ENCODE measurements at regions of chr2 and their contacts with region 1.

Region 1: DNA sequence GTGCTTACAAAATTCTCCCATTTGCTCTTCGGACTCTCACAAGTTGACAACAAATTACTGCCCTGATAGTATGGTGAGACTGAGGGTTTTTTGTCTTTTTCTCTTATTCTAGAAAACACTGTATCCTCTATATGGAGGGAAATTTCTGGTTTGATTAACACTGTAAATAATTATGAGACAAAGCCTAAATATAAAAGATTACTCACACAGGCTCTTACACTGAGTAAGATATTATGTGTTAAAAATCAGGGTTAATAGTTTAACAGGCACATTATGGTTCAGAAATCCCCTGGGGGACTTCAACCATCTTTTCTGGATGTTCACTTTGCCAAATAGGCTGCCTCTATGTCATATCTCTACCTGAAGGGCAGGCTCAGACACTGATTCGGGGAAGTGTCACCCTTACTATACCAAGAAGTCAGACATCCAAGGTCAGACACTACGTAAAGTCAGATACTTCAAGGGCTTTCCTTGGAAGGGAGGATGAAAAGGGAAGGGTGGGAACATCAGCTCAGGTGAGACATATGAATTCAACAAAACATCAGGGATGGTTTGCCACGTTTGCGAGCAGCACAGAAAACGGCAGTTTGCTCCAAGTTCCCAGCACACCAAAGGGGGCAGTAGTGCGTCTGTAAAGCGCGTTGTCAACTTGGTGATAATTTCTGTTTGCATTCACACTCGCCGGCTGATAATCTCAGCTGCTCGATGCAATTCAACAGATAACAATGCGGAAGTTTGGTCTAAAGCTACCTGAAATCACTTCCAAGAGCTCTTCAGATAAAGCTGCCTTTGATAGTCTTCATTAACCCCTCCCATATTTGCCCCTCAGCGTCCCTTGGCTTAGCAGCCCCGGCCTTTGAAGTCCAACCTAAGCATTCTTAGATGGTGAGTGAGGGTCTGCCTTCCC is 972 bp upstream of the RASGRP3 start:
- DNase-seq: peak; percentile 61 to 89 (median 83)
- ATAC-seq: peak; percentile 86
- H3K4me3 ChIP-seq: peak overlapping the region; percentile 81
- H3K4me3 Mint-ChIP-seq: peak overlapping the region; percentile 88 to 99 (median 95)
- H3K27ac ChIP-seq: peak overlapping the region; percentile 91
- H3K27ac Mint-ChIP-seq: peak overlapping the region; percentile 95 to 100 (median 98)
- H3K4me1 ChIP-seq: peaks cover 9 to 11% of the 10 kb centered on the region in 2 donors
- H3K4me1 Mint-ChIP-seq: peaks cover 14 to 39% (median 32%) of the 10 kb centered on the region in 7 donors
- H3K27me3 ChIP-seq: no peaks in the 10 kb centered on the region
- H3K27me3 Mint-ChIP-seq: peaks cover 0 to 4% (median 0%) of the 10 kb centered on the region in 5 donors

Region 2: GRCh38 chr2:32168513-32168912 is 1307.0 kb before region 1 on chr2:
- CTCF ChIA-PET with region 1: no interaction called
- POLR2A ChIA-PET with region 1: no interaction called
- intact Hi-C with region 1: loop called in 1 of 2 experiments (anchors 10 kb)
- DNase-seq: no peak
- ATAC-seq: no peak
- H3K4me3 ChIP-seq: no peak overlapping the region
- H3K4me3 Mint-ChIP-seq: no peak overlapping the region
- H3K27ac ChIP-seq: no peak overlapping the region
- H3K27ac Mint-ChIP-seq: peak overlapping the region in 4 of 9 donors; percentile 2 to 25 (median 10)
- H3K4me1 ChIP-seq: no peaks in the 10 kb centered on the region
- H3K4me1 Mint-ChIP-seq: peaks cover 17 to 61% (median 49%) of the 10 kb centered on the region in 7 donors
- H3K27me3 ChIP-seq: no peaks in the 10 kb centered on the region
- H3K27me3 Mint-ChIP-seq: no peaks in the 10 kb centered on the region

Region 3: DNA sequence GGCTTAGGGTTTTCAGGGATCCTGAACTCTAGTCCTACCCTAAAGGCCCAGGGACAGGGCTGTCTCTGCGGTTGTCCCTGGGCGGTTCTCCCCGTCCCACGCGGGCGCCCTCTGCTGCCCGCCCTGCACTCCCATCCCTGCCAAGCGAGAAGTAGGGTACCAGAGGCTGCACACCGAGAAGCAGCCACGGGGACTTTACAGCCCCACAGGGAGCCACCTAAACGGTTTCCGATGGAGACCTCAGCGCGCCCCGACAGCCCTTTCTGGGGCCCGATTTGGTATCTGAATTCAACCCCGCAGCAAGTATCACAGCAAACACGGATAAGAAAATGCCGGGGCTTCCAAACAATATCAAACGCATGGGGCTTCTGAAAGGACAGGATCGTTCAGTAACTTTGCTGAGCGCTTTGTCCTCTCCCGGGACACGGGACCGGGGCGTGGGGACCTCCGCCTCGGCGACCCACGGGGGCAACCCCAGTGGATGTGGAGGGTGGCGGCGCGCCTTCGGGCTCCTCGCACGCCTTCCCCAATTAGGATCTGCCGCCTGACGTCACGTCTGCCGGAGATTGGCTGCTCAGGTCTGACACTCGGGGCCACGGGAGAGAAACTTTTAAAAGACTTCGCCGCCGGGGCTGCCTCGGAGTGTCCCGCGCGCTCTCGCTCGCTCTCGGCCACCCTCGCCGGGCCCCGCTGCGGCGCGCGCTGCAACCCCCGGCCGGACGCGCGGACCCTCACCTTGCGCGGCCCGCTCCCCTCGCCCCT is 529.0 kb before region 1 on chr2 and contains the start of gene LTBP1:
- CTCF ChIA-PET with region 1: no interaction called
- POLR2A ChIA-PET with region 1: no interaction called
- intact Hi-C with region 1: loop called in 1 of 2 experiments (anchors 5 kb)
- DNase-seq: peak; percentile 3 to 66 (median 18)
- ATAC-seq: peak; percentile 80
- H3K4me3 ChIP-seq: peak within 1 kb of the TSS; percentile 56
- H3K4me3 Mint-ChIP-seq: peak within 1 kb of the TSS; percentile 64 to 87 (median 81)
- H3K27ac ChIP-seq: no peak within 1 kb of the TSS
- H3K27ac Mint-ChIP-seq: peak within 1 kb of the TSS in 1 of 9 donors; percentile 55
- H3K4me1 ChIP-seq: no peaks in the 10 kb centered on the region
- H3K4me1 Mint-ChIP-seq: peaks cover 3 to 12% (median 5%) of the 10 kb centered on the region in 7 donors
- H3K27me3 ChIP-seq: peaks cover 0 to 7% of the 10 kb centered on the region in 2 donors
- H3K27me3 Mint-ChIP-seq: peaks cover 22 to 40% (median 36%) of the 10 kb centered on the region in 5 donors
- total RNA-seq, gene LTBP1: 0.29 to 2.1 TPM in 2 of 5 experiments, not detected in the others

Region 4: GRCh38 chr2:33497221-33497650 is 21.8 kb after region 1 on chr2:
- CTCF ChIA-PET with region 1: no interaction called
- POLR2A ChIA-PET with region 1: interaction called, 5 read pairs
- intact Hi-C with region 1: loop called in 1 of 2 experiments (anchors 1 kb)
- DNase-seq: no peak
- ATAC-seq: peak; percentile 71
- H3K4me3 ChIP-seq: no peak overlapping the region
- H3K4me3 Mint-ChIP-seq: peak overlapping the region in 2 of 10 donors; percentile 2 to 58
- H3K27ac ChIP-seq: no peak overlapping the region
- H3K27ac Mint-ChIP-seq: peak overlapping the region in 1 of 9 donors; percentile 47
- H3K4me1 ChIP-seq: peaks cover 0 to 26% of the 10 kb centered on the region in 2 donors
- H3K4me1 Mint-ChIP-seq: peaks cover 0 to 43% (median 18%) of the 10 kb centered on the region in 7 donors
- H3K27me3 ChIP-seq: no peaks in the 10 kb centered on the region
- H3K27me3 Mint-ChIP-seq: peaks cover 0 to 5% (median 0%) of the 10 kb centered on the region in 5 donors

Region 5: DNA sequence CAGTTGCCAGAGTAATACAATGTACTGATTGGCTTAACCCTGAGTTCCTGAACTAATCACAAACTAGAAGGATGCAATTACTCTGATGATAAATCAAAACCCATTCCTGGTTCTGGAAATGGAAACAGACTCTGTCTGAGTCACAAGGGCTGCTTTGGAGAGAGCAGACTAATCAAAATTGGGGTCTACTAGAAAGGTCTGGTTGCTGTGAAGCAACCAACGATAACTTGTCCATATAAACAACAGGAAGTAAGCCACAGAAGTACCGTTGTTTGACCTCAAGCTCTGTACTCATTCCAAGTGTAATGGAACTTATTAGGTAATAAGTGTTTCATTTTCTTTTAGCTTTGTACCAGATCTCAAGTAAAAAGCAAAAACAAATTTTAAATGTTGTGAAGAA is 50.7 kb after region 1 on chr2:
- CTCF ChIA-PET with region 1: no interaction called
- POLR2A ChIA-PET with region 1: no interaction called
- intact Hi-C with region 1: loop called in 1 of 2 experiments (anchors 2 kb)
- DNase-seq: no peak
- ATAC-seq: no peak
- H3K4me3 ChIP-seq: no peak overlapping the region
- H3K4me3 Mint-ChIP-seq: no peak overlapping the region
- H3K27ac ChIP-seq: no peak overlapping the region
- H3K27ac Mint-ChIP-seq: peak overlapping the region in 1 of 9 donors; percentile 30
- H3K4me1 ChIP-seq: no peaks in the 10 kb centered on the region
- H3K4me1 Mint-ChIP-seq: peaks cover 0 to 20% (median 0%) of the 10 kb centered on the region in 7 donors
- H3K27me3 ChIP-seq: no peaks in the 10 kb centered on the region
- H3K27me3 Mint-ChIP-seq: no peaks in the 10 kb centered on the region

Region 6: GRCh38 chr2:34096562-34097171 is 621.2 kb after region 1 on chr2:
- CTCF ChIA-PET with region 1: no interaction called
- POLR2A ChIA-PET with region 1: no interaction called
- intact Hi-C with region 1: loop called in 1 of 2 experiments (anchors 1 kb)
- DNase-seq: peak in 6 of 9 donors; percentile 7 to 37 (median 21)
- ATAC-seq: peak; percentile 57
- H3K4me3 ChIP-seq: no peak overlapping the region
- H3K4me3 Mint-ChIP-seq: no peak overlapping the region
- H3K27ac ChIP-seq: no peak overlapping the region
- H3K27ac Mint-ChIP-seq: no peak overlapping the region
- H3K4me1 ChIP-seq: no peaks in the 10 kb centered on the region
- H3K4me1 Mint-ChIP-seq: no peaks in the 10 kb centered on the region
- H3K27me3 ChIP-seq: no peaks in the 10 kb centered on the region
- H3K27me3 Mint-ChIP-seq: peaks cover 0 to 17% (median 4%) of the 10 kb centered on the region in 5 donors

Measured in naive thymus-derived CD4-positive, alpha-beta T cell (primary cell).